ENCODE measurements at regions of chr9 and their contacts with region 1.

Region 1: GRCh38 chr9:85258823-85259370 is 482.9 kb downstream of the AGTPBP1 start:
- DNase-seq: peak; percentile 24 to 50
- ATAC-seq: peak; percentile 50 to 95 (median 85)
- H3K4me3 ChIP-seq: peak overlapping the region in 1 of 10 donors; percentile 10
- H3K27ac ChIP-seq: no peak overlapping the region
- H3K4me1 ChIP-seq: peaks cover 0 to 12% (median 0%) of the 10 kb centered on the region in 9 donors
- H3K27me3 ChIP-seq: peaks cover 0 to 5% (median 0%) of the 10 kb centered on the region in 7 donors
- CTCF ChIP-seq: peak; percentile 35 to 78 (median 71)

Region 2: GRCh38 chr9:84397151-84397728 is 861.7 kb before region 1 on chr9:
- intact Hi-C with region 1: loop called (anchors 2 to 10 kb)
- DNase-seq: peak; percentile 31 to 53
- ATAC-seq: peak; percentile 71 to 85 (median 76)
- H3K4me3 ChIP-seq: no peak overlapping the region
- H3K27ac ChIP-seq: no peak overlapping the region
- H3K4me1 ChIP-seq: peaks cover 0 to 8% (median 0%) of the 10 kb centered on the region in 9 donors
- H3K27me3 ChIP-seq: peaks cover 0 to 32% (median 10%) of the 10 kb centered on the region in 7 donors
- CTCF ChIP-seq: peak; percentile 82 to 98 (median 96)

Region 3: GRCh38 chr9:84404095-84404686 is 854.7 kb before region 1 on chr9:
- intact Hi-C with region 1: loop called in 9 of 10 experiments (anchors 5 to 10 kb)
- DNase-seq: no peak
- ATAC-seq: no peak
- H3K4me3 ChIP-seq: no peak overlapping the region
- H3K27ac ChIP-seq: no peak overlapping the region
- H3K4me1 ChIP-seq: no peaks in the 10 kb centered on the region
- H3K27me3 ChIP-seq: peaks cover 0 to 4% (median 0%) of the 10 kb centered on the region in 7 donors
- CTCF ChIP-seq: peak; percentile 33 to 69 (median 58)

Region 4: GRCh38 chr9:84681516-84682285 is 577.2 kb before region 1 on chr9:
- intact Hi-C with region 1: loop called in 1 of 10 experiments (anchors 10 kb)
- DNase-seq: no peak
- ATAC-seq: no peak
- H3K4me3 ChIP-seq: no peak overlapping the region
- H3K27ac ChIP-seq: no peak overlapping the region
- H3K4me1 ChIP-seq: no peaks in the 10 kb centered on the region
- H3K27me3 ChIP-seq: peaks cover 0 to 6% (median 0%) of the 10 kb centered on the region in 7 donors
- CTCF ChIP-seq: no peak

Region 5: DNA sequence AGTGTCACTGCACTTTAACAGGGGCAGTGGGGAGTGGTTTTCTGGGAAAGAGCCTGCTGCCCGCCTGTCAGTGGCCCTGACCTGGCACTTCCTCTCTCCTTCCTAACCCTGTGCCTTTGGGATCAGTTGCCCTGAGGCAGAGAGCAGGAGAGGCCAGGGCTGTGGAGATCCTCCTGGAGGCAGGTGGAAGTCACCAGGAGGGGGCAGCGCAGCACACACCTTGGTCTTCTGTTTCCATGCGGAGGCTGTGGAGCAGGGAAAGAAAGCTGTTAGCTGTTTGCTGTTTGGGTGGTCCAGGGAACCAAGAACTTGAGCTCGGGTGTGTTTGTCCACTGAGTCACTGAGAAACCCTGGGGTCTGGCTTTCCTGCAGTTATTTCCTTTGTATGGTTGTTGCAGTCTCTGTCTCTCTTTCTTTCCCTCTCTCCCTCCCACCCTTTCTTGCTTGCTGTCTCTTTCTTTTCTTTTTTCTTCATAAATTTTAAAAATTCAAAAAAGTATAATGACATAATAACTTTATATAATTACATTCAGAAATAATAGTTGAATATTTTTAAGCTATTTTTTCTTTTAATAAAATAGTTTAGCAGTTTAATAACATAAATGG is 561.3 kb before region 1 on chr9:
- intact Hi-C with region 1: loop called in 4 of 10 experiments (anchors 5 to 10 kb)
- DNase-seq: peak; percentile 67 to 74
- ATAC-seq: peak; percentile 45 to 92 (median 82)
- H3K4me3 ChIP-seq: no peak overlapping the region
- H3K27ac ChIP-seq: no peak overlapping the region
- H3K4me1 ChIP-seq: peaks cover 0 to 8% (median 0%) of the 10 kb centered on the region in 9 donors
- H3K27me3 ChIP-seq: peaks cover 0 to 4% (median 0%) of the 10 kb centered on the region in 7 donors
- CTCF ChIP-seq: peak; percentile 44 to 82 (median 73)

Region 6: GRCh38 chr9:84978661-84979060 is 280.2 kb before region 1 on chr9:
- intact Hi-C with region 1: no loop called
- DNase-seq: no peak
- ATAC-seq: no peak
- H3K4me3 ChIP-seq: no peak overlapping the region
- H3K27ac ChIP-seq: no peak overlapping the region
- H3K4me1 ChIP-seq: no peaks in the 10 kb centered on the region
- H3K27me3 ChIP-seq: peaks cover 0 to 15% (median 0%) of the 10 kb centered on the region in 7 donors
- CTCF ChIP-seq: no peak

Region 7: DNA sequence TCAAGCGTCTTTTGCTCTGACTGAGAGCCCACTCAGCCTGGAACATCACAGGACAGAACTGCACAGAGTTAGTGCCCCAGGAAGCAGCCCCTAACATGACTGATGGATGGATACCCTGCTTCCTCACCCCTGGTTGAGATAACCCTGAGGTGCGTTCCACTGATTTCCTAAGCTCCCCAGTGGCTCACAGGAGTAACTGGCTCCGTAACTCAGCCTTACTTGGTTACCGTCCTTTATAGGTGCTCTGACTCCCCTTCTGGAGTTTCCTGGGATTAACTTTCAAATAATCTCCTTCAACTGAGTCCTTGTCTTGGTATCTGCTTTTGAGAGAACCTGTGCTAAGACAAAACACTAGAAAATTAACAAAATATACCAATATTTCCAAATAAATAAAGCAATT is 33.4 kb after region 1 on chr9:
- intact Hi-C with region 1: no loop called
- DNase-seq: no peak
- ATAC-seq: no peak
- H3K4me3 ChIP-seq: no peak overlapping the region
- H3K27ac ChIP-seq: no peak overlapping the region
- H3K4me1 ChIP-seq: no peaks in the 10 kb centered on the region
- H3K27me3 ChIP-seq: peaks cover 0 to 4% (median 0%) of the 10 kb centered on the region in 7 donors
- CTCF ChIP-seq: no peak

Region 8: GRCh38 chr9:85600675-85601263 is 341.9 kb after region 1 on chr9:
- intact Hi-C with region 1: loop called in 1 of 10 experiments (anchors 10 kb)
- DNase-seq: no peak
- ATAC-seq: peak; percentile 17 to 79 (median 72)
- H3K4me3 ChIP-seq: no peak overlapping the region
- H3K27ac ChIP-seq: peak overlapping the region in 1 of 10 donors; percentile 29
- H3K4me1 ChIP-seq: peaks cover 0 to 17% (median 10%) of the 10 kb centered on the region in 9 donors
- H3K27me3 ChIP-seq: no peaks in the 10 kb centered on the region
- CTCF ChIP-seq: no peak

Region 9: GRCh38 chr9:85941966-85942912 is 683.3 kb after region 1 on chr9:
- intact Hi-C with region 1: no loop called
- DNase-seq: no peak
- ATAC-seq: no peak
- H3K4me3 ChIP-seq: peak overlapping the region; percentile 67 to 99 (median 92)
- H3K27ac ChIP-seq: peak overlapping the region; percentile 84 to 98 (median 96)
- H3K4me1 ChIP-seq: peaks cover 2 to 40% (median 33%) of the 10 kb centered on the region in 9 donors
- H3K27me3 ChIP-seq: no peaks in the 10 kb centered on the region
- CTCF ChIP-seq: no peak